ENCODE measurements at regions of chr12 and their contacts with region 1.

Region 1: GRCh38 chr12:25195056-25195971 is at the starts of genes DNAI7 and ETFRF1:
- DNase-seq: peak; percentile 88 to 99 (median 94)

Region 2: DNA sequence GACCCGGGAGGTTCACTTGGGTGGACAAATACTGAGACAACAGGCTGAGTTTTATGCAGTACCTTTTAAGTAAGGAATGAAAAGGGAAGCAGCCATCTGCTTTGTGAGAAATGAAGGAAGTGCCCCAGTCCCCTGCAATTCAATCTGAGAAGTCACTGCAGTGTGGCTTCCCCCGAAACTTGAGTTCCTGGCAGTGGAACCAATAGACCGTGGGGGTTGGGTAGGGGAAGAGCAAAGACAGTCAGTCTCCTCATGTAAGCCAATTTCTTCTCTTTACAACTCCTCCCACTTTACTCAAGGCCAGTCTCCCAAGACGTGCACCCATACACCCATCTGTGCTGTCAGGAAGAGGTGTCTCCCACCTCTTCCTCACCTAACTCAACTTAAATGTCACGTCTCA is 452.9 kb before region 1 on chr12:
- intact Hi-C with region 1: no loop called
- DNase-seq: peak in 5 of 10 donors; percentile 7 to 36 (median 10)

Region 3: DNA sequence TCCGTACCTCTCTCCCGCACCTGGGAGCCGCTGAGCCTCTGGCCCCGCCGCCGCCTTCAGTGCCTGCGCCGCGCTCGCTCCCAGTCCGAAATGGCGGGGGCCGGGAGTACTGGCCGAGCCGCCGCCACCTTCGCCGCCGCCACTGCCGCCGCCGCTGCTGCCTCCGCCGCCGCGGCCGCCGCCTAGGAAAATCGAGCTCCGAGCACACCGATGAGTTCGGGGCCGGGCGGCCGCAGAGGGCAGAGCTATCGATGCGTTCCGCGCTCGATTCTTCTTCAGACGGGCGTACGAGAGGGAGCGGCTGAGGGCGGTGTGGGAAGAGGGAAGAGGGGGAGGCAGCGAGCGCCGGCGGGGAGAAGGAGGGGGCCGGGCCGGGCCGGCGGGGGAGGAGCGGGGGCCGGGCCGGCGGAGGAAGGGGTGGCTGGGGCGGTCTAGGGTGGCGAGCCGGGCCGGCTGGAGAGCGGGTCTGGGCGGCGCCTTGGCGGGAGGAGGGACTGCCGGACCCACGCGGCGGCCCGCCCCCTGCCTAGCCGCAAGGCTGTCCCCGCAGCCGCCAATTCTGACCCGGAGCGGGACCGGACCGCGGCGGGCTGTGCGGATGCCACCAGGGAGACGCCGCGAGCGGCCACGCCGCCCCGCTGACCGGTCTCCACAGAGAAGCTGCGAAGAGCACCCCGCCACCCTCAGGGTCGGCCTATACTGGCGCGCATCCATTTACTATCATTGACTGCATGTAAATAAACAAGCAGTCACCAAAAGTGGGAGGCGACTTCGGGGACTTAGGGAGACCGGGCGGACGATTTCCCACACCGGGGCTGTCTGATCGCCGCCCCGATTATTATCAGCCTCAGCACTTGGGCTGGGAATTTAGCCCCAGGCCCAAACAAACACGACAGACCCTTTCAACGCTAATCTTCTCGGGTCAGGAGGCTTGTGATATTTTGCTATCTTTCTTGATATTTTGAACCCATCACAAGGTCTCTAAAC is 55.7 kb after region 1 on chr12 and contains the start of gene KRAS:
- intact Hi-C with region 1: loop called (anchors 5 kb)
- DNase-seq: peak; percentile 90 to 99 (median 93)

Region 4: GRCh38 chr12:25377469-25378177 is 182.3 kb after region 1 on chr12:
- intact Hi-C with region 1: no loop called
- DNase-seq: peak in 3 of 10 donors; percentile 14 to 74 (median 43)